Ascending aorta (tissue), 2 donors: ENCODE measurements at regions of chr3 and their contacts with region 1.

Region 1: DNA sequence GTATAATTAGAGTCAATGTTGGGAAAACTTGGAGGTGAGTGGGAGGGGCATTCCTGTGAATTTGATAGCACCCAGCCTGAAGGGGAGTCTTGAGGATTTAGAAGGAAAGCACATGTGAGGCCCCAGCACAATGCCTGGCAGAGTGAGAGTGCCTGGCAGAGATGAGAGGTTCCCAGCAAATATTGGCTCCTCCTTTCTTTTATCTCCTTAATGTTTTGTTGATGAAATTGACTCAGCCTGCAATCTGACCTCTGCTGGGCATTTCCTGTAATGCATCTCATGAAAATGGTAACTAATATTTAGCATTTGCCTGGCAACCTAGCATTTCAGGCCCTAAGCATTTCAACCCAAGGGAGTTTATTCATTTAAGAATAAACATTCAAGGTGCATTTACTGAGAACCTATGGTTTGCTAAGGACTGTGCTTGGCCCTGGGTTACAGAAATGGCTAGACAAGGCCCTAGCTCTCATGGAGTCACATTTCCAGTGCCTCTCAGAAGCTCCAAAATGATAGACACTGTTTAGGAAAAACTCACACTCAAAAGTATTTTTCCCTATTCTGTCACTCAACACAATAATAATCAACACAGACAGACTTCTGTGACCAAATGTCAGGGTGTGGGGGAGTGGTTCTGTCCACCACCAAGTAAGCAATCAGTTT is 19.0 kb downstream of the PDHB start:
- DNase-seq: peak in 1 of 2 donors; percentile 74
- H3K4me3 ChIP-seq: no peak overlapping the region
- H3K27ac ChIP-seq: no peak overlapping the region
- H3K4me1 ChIP-seq: peaks cover 0 to 4% of the 10 kb centered on the region in 2 donors
- H3K27me3 ChIP-seq: no peaks in the 10 kb centered on the region
- CTCF ChIP-seq: peak; percentile 49 to 67 (median 58)

Region 2: GRCh38 chr3:58177747-58178527 is 236.7 kb before region 1 on chr3:
- intact Hi-C with region 1: loop called (anchors 5 kb)
- DNase-seq: peak; percentile 51 to 94
- H3K4me3 ChIP-seq: peak overlapping the region; percentile 57 to 62
- H3K27ac ChIP-seq: no peak overlapping the region
- H3K4me1 ChIP-seq: peaks cover 3 to 17% of the 10 kb centered on the region in 2 donors
- H3K27me3 ChIP-seq: no peaks in the 10 kb centered on the region
- CTCF ChIP-seq: peak; percentile 93 to 95 (median 93)

Region 3: DNA sequence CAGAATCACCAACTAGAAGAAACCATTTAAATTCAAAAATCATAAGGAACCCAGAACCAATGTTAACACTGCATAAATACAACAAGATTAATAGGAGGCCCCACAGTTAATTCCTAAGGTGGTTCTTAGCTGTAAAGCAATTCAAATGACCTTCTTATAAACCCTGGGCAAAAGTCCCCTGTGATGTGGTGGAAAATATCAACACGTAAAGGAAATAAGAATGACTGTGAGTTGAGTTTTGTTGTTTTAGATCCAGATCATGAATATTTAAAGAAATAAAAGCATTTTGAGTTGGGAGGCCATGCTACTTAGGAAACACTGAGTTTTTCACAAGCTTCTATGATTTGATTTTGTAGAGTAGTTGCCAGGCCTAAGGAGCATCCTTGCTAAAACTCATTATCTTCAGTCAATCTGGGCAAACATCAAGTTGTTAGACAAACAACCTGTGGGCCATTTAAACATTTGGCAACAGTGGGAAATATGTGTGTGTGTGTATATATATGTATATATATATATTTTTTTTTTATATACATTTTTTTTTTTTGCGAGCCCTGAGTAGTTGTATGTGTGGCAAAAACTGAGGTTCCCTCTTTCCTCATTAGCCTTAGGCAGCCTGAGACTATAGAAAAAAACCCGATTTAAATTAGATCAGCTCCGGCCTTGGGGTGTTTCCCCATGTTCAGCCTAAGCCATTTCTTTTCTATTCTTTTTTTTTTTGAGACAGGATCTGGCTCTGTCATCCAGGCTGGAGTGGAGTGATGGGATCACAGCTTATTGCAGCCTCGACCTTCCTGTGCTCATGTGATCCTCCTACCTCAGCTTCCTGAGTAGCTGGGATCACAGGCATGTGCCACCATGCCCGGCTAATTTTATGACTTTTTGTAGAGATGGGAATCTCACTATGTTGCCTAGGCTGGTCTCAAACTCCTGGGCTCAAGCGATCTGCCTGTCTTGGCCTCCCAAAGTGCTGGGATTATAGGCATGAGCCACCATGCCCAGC is 90.0 kb before region 1 on chr3:
- intact Hi-C with region 1: loop called (anchors 2 kb)
- DNase-seq: no peak
- H3K4me3 ChIP-seq: no peak overlapping the region
- H3K27ac ChIP-seq: peak overlapping the region in 1 of 2 donors; percentile 44
- H3K4me1 ChIP-seq: peaks cover 0 to 2% of the 10 kb centered on the region in 2 donors
- H3K27me3 ChIP-seq: no peaks in the 10 kb centered on the region
- CTCF ChIP-seq: no peak

Region 4: DNA sequence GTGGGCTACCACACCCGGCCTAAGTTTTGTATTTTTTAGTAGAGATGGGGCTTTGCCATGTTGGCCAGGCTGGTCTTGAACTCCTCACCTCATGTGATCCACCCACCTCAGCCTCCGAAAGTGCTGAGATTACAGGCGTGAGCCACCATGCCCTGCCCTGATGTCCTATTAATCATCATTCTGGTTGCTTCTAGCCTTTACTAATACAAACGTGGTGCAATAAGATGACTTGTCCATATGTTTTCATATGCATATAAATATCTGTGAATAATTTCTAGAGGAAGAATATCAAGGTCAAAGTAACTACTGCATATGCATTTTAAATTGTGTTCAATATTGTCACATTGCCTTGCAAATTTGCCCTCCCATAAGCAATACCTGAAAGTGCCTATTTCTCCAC is 44.5 kb after region 1 on chr3:
- intact Hi-C with region 1: no loop called
- DNase-seq: no peak
- H3K4me3 ChIP-seq: no peak overlapping the region
- H3K27ac ChIP-seq: no peak overlapping the region
- H3K4me1 ChIP-seq: peaks cover 0 to 2% of the 10 kb centered on the region in 2 donors
- H3K27me3 ChIP-seq: no peaks in the 10 kb centered on the region
- CTCF ChIP-seq: no peak

Region 5: DNA sequence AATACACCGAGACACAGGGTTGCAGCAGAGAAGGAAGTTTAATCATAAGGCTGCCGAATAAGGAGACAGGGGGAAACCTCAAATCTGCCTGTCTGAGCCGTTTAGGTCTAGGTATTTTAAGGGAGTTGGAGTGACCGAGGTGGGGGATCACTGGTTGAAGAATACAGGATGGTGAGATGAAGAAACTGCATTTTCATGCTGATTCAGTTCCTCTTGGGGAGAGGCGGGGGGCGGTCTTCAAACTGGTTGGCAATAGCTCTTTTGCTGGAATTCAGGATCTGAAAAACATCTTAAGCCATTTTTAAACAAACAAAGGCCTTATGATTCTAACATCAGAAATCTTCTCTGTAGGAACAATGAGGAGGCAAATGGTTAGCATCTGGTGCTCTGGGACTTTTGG is 1334.6 kb after region 1 on chr3:
- intact Hi-C with region 1: no loop called
- DNase-seq: no peak
- H3K4me3 ChIP-seq: no peak overlapping the region
- H3K27ac ChIP-seq: no peak overlapping the region
- H3K4me1 ChIP-seq: no peaks in the 10 kb centered on the region
- H3K27me3 ChIP-seq: no peaks in the 10 kb centered on the region
- CTCF ChIP-seq: no peak